ENCODE measurements at regions of chr2 and their contacts with region 1.

Region 1: DNA sequence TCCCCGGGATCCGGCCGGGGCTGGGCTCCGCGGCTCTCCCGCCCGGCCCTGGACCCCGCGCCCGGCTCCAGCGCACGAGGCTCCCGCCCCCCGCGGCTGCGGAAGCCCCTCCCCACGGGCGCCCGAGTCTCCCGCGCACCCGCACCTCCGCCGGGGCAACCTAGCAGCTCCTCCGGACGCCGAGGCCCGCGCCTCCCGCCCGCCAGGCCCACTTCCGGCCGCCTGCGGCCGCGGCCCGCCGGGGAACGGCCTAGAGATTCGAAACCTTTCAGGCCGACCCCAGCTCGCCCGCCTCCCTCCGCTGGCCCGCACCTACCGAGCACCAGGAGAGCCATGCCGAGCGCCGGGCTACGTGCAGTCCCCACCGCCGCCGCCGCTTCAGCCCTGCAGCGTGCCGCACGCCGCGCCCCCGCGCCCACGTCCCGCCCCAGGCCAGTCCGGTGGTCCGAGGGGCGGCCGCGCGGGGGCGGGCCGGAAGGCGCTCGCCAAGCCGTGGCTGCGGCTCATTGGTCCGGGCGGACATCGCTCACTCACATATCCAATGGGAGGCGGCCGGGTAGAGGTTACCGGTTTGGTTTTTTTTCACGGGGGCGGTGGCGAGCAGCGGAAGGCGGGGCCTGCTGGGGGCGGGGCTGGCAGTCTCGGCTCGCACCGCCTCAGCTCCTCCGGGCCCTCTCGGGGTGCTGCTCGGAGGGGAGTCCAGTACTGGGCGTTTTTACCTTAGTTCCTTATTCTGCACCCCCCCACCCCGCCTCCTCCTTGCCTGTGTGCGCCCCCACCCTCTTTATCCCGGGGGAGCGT is at the start of gene PDIA6:
- DNase-seq: peak; percentile 98
- H3K4me3 Mint-ChIP-seq: peak within 1 kb of the TSS; percentile 71
- H3K27ac Mint-ChIP-seq: peak within 1 kb of the TSS; percentile 75
- H3K4me1 Mint-ChIP-seq: peaks cover 19% of the 10 kb centered on the region
- H3K27me3 Mint-ChIP-seq: peaks cover 18% of the 10 kb centered on the region
- CTCF ChIP-seq: no peak
- total RNA-seq, gene PDIA6: 313 and 317 TPM in 2 replicates

Region 2: GRCh38 chr2:10717613-10718012 is 94.9 kb before region 1 on chr2:
- CTCF ChIA-PET with region 1: no interaction called
- intact Hi-C with region 1: loop called (anchors 10 kb)
- DNase-seq: peak; percentile 32
- H3K4me3 Mint-ChIP-seq: no peak overlapping the region
- H3K27ac Mint-ChIP-seq: no peak overlapping the region
- H3K4me1 Mint-ChIP-seq: peaks cover 17% of the 10 kb centered on the region
- H3K27me3 Mint-ChIP-seq: peaks cover 44% of the 10 kb centered on the region
- CTCF ChIP-seq: no peak

Region 3: GRCh38 chr2:10787176-10787968 is 25.2 kb before region 1 on chr2:
- CTCF ChIA-PET with region 1: no interaction called
- intact Hi-C with region 1: loop called (anchors 2 kb)
- DNase-seq: no peak
- H3K4me3 Mint-ChIP-seq: no peak overlapping the region
- H3K27ac Mint-ChIP-seq: no peak overlapping the region
- H3K4me1 Mint-ChIP-seq: peaks cover 30% of the 10 kb centered on the region
- H3K27me3 Mint-ChIP-seq: no peaks in the 10 kb centered on the region
- CTCF ChIP-seq: no peak